ENCODE measurements at regions of chr11 and their contacts with region 1.

Region 1: DNA sequence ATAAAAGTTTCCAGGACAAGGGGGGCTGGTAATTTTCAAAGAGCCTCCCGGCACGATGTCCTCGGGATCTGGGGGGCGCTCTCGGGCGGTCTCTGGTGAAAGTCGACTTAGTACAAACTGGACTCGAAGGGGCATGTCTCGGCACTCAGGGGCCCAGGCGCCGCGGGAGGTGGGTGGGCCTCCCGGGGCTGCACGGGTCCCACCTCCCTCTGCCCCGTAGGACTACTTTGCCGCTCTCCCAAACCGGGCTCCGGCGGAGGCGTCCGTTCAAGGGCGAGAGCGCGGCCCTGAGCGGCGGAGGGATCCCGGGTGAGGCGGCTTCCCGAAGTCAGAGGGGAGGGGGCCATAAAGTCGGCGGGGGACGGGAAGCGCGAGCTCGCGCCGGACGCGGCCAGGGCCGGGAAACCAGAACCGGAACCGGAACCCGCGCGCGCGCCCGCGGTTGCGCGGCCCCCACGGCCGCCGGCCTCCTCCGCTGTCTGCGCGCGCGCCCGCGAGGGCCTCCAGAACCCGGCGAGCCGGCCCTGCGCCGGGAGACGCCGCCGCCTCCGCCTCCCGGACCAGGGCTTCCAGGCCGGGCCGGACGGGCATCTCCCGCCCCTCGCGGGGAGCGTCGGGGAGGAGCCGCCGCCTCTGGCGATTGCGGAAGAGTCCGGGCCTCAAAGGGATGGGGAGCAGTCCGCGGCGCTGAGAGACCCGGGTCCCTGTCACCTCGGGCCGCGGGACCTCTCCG is at the start of gene ARHGEF12:
- DNase-seq: peak; percentile 89
- ATAC-seq: peak; percentile 76
- H3K4me3 Mint-ChIP-seq: peak within 1 kb of the TSS; percentile 99
- H3K27ac Mint-ChIP-seq: peak within 1 kb of the TSS; percentile 80
- H3K4me1 Mint-ChIP-seq: peaks cover 58% of the 10 kb centered on the region
- H3K27me3 Mint-ChIP-seq: peaks cover 19% of the 10 kb centered on the region
- total RNA-seq, gene ARHGEF12: 44.6 to 61.1 TPM

Region 2: GRCh38 chr11:120228794-120229384 is 107.2 kb before region 1 on chr11:
- CTCF ChIA-PET with region 1: no interaction called
- DNase-seq: no peak
- ATAC-seq: no peak
- H3K4me3 Mint-ChIP-seq: no peak overlapping the region
- H3K27ac Mint-ChIP-seq: no peak overlapping the region
- H3K4me1 Mint-ChIP-seq: peaks cover 8% of the 10 kb centered on the region
- H3K27me3 Mint-ChIP-seq: peaks cover 27% of the 10 kb centered on the region

Region 3: DNA sequence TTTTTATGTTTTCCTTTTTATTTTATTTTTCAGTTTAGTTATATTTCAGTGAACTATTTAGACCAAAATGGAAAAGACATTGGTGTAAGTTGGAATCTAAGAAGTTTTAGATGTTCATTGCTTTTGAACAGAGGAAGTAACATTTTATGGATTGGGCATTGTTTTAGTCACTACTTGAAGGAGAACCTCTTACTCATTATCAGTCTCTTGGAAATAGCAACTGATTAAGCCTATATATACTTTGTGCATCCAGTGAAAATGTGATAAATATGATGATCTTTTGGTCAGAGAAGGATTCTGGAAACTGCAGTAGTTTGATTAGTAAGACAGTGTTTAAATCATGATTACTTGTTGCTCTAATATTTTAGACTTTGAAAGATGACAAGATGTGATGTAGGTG is 14.6 kb after region 1 on chr11:
- CTCF ChIA-PET with region 1: interaction called, 10 read pairs
- DNase-seq: no peak
- ATAC-seq: no peak
- H3K4me3 Mint-ChIP-seq: no peak overlapping the region
- H3K27ac Mint-ChIP-seq: no peak overlapping the region
- H3K4me1 Mint-ChIP-seq: peaks cover 14% of the 10 kb centered on the region
- H3K27me3 Mint-ChIP-seq: peaks cover 20% of the 10 kb centered on the region

Region 4: GRCh38 chr11:120682866-120683265 is 346.8 kb after region 1 on chr11:
- CTCF ChIA-PET with region 1: interaction called, 18 read pairs
- DNase-seq: no peak
- ATAC-seq: no peak
- H3K4me3 Mint-ChIP-seq: no peak overlapping the region
- H3K27ac Mint-ChIP-seq: no peak overlapping the region
- H3K4me1 Mint-ChIP-seq: no peaks in the 10 kb centered on the region
- H3K27me3 Mint-ChIP-seq: peaks cover 30% of the 10 kb centered on the region

Measured in activated CD8-positive, alpha-beta memory T cell treated with anti-CD3 and anti-CD28 coated beads, Interleukin-2, amount 10 ng/mL, durations not matched to agents 7 days and 5 days (primary cell).